CD14-positive monocyte (primary cell): ENCODE measurements at regions of chr1 and their contacts with region 1.

Region 1: DNA sequence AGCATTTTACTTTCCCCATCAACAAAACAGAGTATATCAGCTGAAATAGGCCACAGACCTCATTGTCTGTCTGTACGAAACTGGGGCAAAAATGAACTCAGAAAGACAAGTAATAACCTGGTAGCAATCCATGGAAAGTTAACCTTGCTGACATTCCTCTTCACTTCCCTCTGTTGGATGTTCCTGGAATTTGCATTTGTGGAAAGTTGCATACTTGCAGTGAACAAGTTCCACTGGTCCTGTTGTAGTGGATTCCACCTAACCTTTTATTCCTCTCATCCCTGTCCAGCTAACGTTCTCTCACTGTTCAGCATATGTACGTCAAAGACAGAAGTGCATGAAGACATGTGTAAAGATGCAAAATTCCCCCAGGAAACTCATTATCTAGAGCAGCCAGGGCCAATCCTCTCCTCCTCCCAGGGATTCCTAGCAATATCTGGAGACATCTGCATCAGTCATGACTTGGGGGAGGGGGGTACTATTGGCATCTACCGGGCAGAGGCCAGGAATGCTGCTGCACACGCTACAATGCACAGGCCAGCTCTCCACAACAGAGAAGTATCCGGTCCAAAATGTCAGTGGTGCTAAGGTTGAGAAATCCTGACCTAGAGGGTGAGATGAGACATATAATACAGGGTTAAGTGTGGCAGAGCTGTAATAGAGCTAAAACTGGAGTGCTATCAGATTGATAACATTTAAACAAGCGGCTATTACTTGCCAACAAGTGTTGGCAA is 8.2 kb downstream of the LPAR3 start:
- DNase-seq: no peak
- H3K4me3 ChIP-seq: no peak overlapping the region
- H3K4me3 Mint-ChIP-seq: no peak overlapping the region
- H3K27ac ChIP-seq: no peak overlapping the region
- H3K27ac Mint-ChIP-seq: peak overlapping the region in 1 of 7 donors; percentile 2
- H3K4me1 ChIP-seq: peaks cover 13 to 16% of the 10 kb centered on the region in 2 donors
- H3K4me1 Mint-ChIP-seq: peaks cover 19% of the 10 kb centered on the region
- H3K27me3 ChIP-seq: no peaks in the 10 kb centered on the region
- H3K27me3 Mint-ChIP-seq: peaks cover 1 to 10% (median 2%) of the 10 kb centered on the region in 3 donors
- CTCF ChIP-seq: no peak

Region 2: DNA sequence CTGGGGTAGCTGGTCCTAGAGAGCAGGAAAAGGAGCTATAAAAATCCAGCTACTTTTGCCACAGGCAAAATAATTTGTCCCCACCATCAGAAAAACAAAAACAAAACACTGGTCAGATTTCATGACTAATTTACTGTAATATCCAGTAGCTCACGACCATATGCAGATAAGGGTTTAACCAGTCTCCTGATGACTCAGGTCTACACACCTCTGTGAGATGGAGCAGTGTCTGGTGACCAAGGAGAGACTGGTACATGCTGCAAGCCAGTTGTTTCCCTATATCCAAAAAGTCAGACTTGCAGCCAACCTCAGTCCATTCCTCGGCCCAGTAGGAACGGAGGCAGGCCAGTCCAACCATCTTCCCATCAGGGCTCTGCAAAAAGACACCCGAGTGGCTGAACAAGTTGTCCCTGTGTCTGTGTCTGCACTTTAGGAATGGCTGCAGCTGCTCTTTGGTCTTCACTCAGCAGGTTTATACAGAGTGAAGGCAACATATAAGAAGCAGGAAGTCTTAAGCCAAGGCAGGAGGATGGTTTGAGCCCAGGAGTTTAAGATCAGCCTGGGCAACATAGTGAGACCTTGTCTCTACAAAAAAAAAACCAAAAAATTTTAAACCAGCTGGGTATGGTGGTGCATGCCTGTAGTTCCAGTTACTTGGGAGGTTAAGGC is 457.2 kb before region 1 on chr1:
- intact Hi-C with region 1: no loop called
- DNase-seq: no peak
- H3K4me3 ChIP-seq: no peak overlapping the region
- H3K4me3 Mint-ChIP-seq: no peak overlapping the region
- H3K27ac ChIP-seq: no peak overlapping the region
- H3K27ac Mint-ChIP-seq: peak overlapping the region in 3 of 7 donors; percentile 16 to 66 (median 41)
- H3K4me1 ChIP-seq: peaks cover 24 to 25% of the 10 kb centered on the region in 2 donors
- H3K4me1 Mint-ChIP-seq: peaks cover 25% of the 10 kb centered on the region
- H3K27me3 ChIP-seq: no peaks in the 10 kb centered on the region
- H3K27me3 Mint-ChIP-seq: peaks cover 0 to 3% (median 0%) of the 10 kb centered on the region in 3 donors
- CTCF ChIP-seq: no peak

Region 3: GRCh38 chr1:84823511-84823910 is 61.3 kb before region 1 on chr1:
- intact Hi-C with region 1: loop called in 1 of 2 experiments (anchors 10 kb)
- DNase-seq: no peak
- H3K4me3 ChIP-seq: no peak overlapping the region
- H3K4me3 Mint-ChIP-seq: no peak overlapping the region
- H3K27ac ChIP-seq: no peak overlapping the region
- H3K27ac Mint-ChIP-seq: no peak overlapping the region
- H3K4me1 ChIP-seq: no peaks in the 10 kb centered on the region
- H3K4me1 Mint-ChIP-seq: no peaks in the 10 kb centered on the region
- H3K27me3 ChIP-seq: no peaks in the 10 kb centered on the region
- H3K27me3 Mint-ChIP-seq: peaks cover 0 to 2% (median 0%) of the 10 kb centered on the region in 3 donors
- CTCF ChIP-seq: no peak

Region 4: GRCh38 chr1:84834419-84835064 is 50.3 kb before region 1 on chr1:
- intact Hi-C with region 1: loop called (anchors 10 kb)
- DNase-seq: no peak
- H3K4me3 ChIP-seq: no peak overlapping the region
- H3K4me3 Mint-ChIP-seq: no peak overlapping the region
- H3K27ac ChIP-seq: no peak overlapping the region
- H3K27ac Mint-ChIP-seq: no peak overlapping the region
- H3K4me1 ChIP-seq: no peaks in the 10 kb centered on the region
- H3K4me1 Mint-ChIP-seq: no peaks in the 10 kb centered on the region
- H3K27me3 ChIP-seq: no peaks in the 10 kb centered on the region
- H3K27me3 Mint-ChIP-seq: peaks cover 3 to 4% (median 3%) of the 10 kb centered on the region in 3 donors
- CTCF ChIP-seq: no peak